CD4-positive, alpha-beta memory T cell (primary cell): ENCODE measurements at regions of chr10 and their contacts with region 1.

Region 1: DNA sequence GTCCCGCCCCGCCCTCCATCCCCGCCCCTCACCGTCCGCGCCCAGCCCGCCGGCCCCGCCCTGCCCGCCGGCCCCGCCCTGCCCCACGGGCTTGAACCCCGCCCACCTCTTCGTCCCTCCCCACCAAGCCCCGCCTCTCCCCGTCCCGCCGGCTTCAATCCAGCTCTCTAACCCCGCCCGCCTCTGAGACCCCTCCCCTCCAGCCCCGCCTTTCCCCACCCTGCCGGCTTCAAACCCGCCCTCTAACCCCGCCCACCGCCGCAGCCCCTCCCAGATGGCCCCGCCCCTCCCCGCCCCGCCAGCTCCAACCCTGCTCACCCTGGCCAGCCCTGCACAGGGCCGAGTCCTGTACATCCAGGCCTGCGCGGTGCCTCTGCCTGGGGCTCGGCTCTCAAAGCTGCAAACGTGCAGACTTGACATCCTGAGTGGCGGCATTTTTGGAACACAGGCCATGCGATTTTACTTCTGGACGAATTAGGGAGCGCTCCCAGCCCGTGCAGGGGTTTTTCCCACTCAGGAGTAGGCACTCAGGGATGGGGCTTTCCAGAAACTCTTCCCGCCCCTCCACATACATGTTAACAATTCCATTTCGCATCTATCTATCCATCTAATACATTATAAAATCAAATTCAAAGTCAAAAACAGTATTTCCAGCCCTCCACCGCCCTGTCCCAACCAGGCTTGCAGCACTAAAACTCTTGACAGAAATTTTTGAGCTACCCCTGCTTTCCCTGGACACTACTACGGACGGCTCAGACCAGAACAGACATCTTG is 475 bp upstream of the NMT2 start:
- DNase-seq: peak; percentile 88 to 96 (median 91)
- H3K4me3 ChIP-seq: peak overlapping the region; percentile 1 to 44
- H3K4me3 Mint-ChIP-seq: peak overlapping the region; percentile 85 to 93 (median 88)
- H3K27ac ChIP-seq: peak overlapping the region; percentile 46
- H3K27ac Mint-ChIP-seq: peak overlapping the region; percentile 73 to 97 (median 93)
- H3K4me1 ChIP-seq: peaks cover 74% of the 10 kb centered on the region
- H3K4me1 Mint-ChIP-seq: peaks cover 46 to 67% (median 57%) of the 10 kb centered on the region in 4 donors
- H3K27me3 ChIP-seq: no peaks in the 10 kb centered on the region
- H3K27me3 Mint-ChIP-seq: no peaks in the 10 kb centered on the region

Region 2: GRCh38 chr10:13787015-13787421 is 1382.0 kb before region 1 on chr10:
- CTCF ChIA-PET with region 1: no interaction called
- POLR2A ChIA-PET with region 1: no interaction called
- intact Hi-C with region 1: loop called (anchors 10 kb)
- DNase-seq: peak; percentile 87 to 94 (median 91)
- H3K4me3 ChIP-seq: peak overlapping the region in 1 of 2 donors; percentile 32
- H3K4me3 Mint-ChIP-seq: peak overlapping the region; percentile 65 to 91 (median 81)
- H3K27ac ChIP-seq: peak overlapping the region; percentile 91
- H3K27ac Mint-ChIP-seq: no peak overlapping the region
- H3K4me1 ChIP-seq: peaks cover 51% of the 10 kb centered on the region
- H3K4me1 Mint-ChIP-seq: peaks cover 10 to 34% (median 25%) of the 10 kb centered on the region in 4 donors
- H3K27me3 ChIP-seq: no peaks in the 10 kb centered on the region
- H3K27me3 Mint-ChIP-seq: no peaks in the 10 kb centered on the region

Region 3: GRCh38 chr10:14959276-14960057 is 209.5 kb before region 1 on chr10 and contains the start of gene MEIG1:
- CTCF ChIA-PET with region 1: no interaction called
- POLR2A ChIA-PET with region 1: no interaction called
- intact Hi-C with region 1: loop called (anchors 2 kb)
- DNase-seq: peak; percentile 87 to 92 (median 88)
- H3K4me3 ChIP-seq: peak within 1 kb of the TSS; percentile 79 to 98
- H3K4me3 Mint-ChIP-seq: peak within 1 kb of the TSS; percentile 93 to 99 (median 96)
- H3K27ac ChIP-seq: peak within 1 kb of the TSS; percentile 92
- H3K27ac Mint-ChIP-seq: peak within 1 kb of the TSS; percentile 93 to 99 (median 96)
- H3K4me1 ChIP-seq: peaks cover 14% of the 10 kb centered on the region
- H3K4me1 Mint-ChIP-seq: peaks cover 20 to 40% (median 29%) of the 10 kb centered on the region in 4 donors
- H3K27me3 ChIP-seq: no peaks in the 10 kb centered on the region
- H3K27me3 Mint-ChIP-seq: no peaks in the 10 kb centered on the region
- total RNA-seq, gene MEIG1: not detected

Region 4: GRCh38 chr10:15106352-15107013 is 62.5 kb before region 1 on chr10:
- CTCF ChIA-PET with region 1: interaction called, 11 read pairs
- POLR2A ChIA-PET with region 1: interaction called, 4 read pairs
- intact Hi-C with region 1: no loop called
- DNase-seq: peak; percentile 55 to 68 (median 62)
- H3K4me3 ChIP-seq: no peak overlapping the region
- H3K4me3 Mint-ChIP-seq: peak overlapping the region in 3 of 8 donors; percentile 11 to 48 (median 45)
- H3K27ac ChIP-seq: no peak overlapping the region
- H3K27ac Mint-ChIP-seq: peak overlapping the region; percentile 72 to 85 (median 76)
- H3K4me1 ChIP-seq: peaks cover 4% of the 10 kb centered on the region
- H3K4me1 Mint-ChIP-seq: peaks cover 4 to 9% (median 7%) of the 10 kb centered on the region in 4 donors
- H3K27me3 ChIP-seq: no peaks in the 10 kb centered on the region
- H3K27me3 Mint-ChIP-seq: no peaks in the 10 kb centered on the region

Region 5: GRCh38 chr10:15182540-15183207 is 13.7 kb after region 1 on chr10:
- CTCF ChIA-PET with region 1: interaction called, 48 read pairs
- POLR2A ChIA-PET with region 1: interaction called, 62 read pairs
- intact Hi-C with region 1: loop called (anchors 1 kb)
- DNase-seq: no peak
- H3K4me3 ChIP-seq: no peak overlapping the region
- H3K4me3 Mint-ChIP-seq: no peak overlapping the region
- H3K27ac ChIP-seq: no peak overlapping the region
- H3K27ac Mint-ChIP-seq: peak overlapping the region in 4 of 7 donors; percentile 14 to 56 (median 20)
- H3K4me1 ChIP-seq: peaks cover 25% of the 10 kb centered on the region
- H3K4me1 Mint-ChIP-seq: peaks cover 12 to 33% (median 21%) of the 10 kb centered on the region in 4 donors
- H3K27me3 ChIP-seq: no peaks in the 10 kb centered on the region
- H3K27me3 Mint-ChIP-seq: no peaks in the 10 kb centered on the region

Region 6: DNA sequence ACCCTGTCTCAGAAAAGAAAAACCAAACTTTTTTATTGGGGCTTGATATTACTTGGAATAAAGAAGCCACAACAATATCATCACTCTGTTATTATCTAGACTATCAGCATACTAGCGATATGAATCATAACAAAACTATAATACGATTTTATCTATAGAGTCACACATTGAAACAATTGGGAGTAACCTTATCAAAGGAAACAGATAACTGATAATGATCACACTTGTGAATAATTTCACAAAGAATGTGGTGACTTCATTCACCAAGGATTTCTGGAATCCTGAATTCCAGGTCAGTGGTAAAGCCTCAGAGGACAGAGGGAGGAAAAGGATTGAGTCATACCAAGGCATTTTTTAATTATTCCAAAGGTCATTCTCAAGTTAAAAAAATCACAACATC is 31.7 kb after region 1 on chr10:
- CTCF ChIA-PET with region 1: interaction called, 4 read pairs
- POLR2A ChIA-PET with region 1: interaction called, 93 read pairs
- intact Hi-C with region 1: loop called (anchors 1 kb)
- DNase-seq: no peak
- H3K4me3 ChIP-seq: no peak overlapping the region
- H3K4me3 Mint-ChIP-seq: peak overlapping the region in 2 of 8 donors; percentile 10 to 20
- H3K27ac ChIP-seq: no peak overlapping the region
- H3K27ac Mint-ChIP-seq: peak overlapping the region in 3 of 7 donors; percentile 3 to 50 (median 32)
- H3K4me1 ChIP-seq: peaks cover 43% of the 10 kb centered on the region
- H3K4me1 Mint-ChIP-seq: peaks cover 9 to 81% (median 48%) of the 10 kb centered on the region in 4 donors
- H3K27me3 ChIP-seq: no peaks in the 10 kb centered on the region
- H3K27me3 Mint-ChIP-seq: peaks cover 0 to 1% of the 10 kb centered on the region in 2 donors

Region 7: DNA sequence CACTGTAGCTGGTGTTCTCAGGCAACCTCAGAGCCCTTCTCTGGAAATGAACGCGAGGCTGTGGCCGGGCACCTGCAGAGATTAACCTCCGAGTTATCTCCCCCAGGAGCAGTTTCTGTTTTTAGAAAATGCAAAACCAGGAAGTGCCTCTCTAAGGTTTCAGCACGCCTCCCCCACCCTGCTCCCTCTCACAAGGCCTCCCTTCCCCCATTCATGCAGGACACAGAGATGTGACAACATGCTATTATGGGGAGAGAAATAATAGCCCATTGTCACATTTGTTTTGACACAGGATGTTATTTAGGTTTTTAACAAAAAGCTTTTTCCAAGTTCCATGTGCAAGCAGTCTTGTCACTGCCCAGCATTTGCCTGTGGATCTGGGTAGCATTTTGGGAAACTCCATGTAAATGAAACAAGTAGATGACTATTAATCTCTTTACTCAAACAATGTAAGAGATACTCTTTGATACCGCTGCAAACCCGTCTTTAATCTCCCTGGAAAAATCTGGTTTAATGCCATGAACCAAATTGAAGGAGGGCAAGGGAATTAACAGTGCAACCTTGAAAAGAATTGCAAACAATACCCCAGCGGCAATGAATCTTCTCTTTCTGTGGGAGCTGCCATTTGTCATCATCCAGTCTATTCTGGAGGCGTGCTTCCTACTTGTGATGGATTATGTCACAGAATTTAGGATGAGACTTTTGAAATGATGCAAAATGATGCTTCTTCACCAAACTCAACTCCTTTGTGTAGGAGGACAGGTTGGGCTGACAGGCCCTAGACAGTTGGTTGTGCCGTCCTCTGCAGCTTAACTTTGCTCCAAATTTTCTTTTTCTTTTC is 86.1 kb after region 1 on chr10:
- CTCF ChIA-PET with region 1: interaction called, 5 read pairs
- POLR2A ChIA-PET with region 1: interaction called, 8 read pairs
- intact Hi-C with region 1: loop called (anchors 5 kb)
- DNase-seq: peak in 4 of 5 donors; percentile 6 to 18 (median 12)
- H3K4me3 ChIP-seq: peak overlapping the region; percentile 58 to 94
- H3K4me3 Mint-ChIP-seq: peak overlapping the region; percentile 90 to 99 (median 97)
- H3K27ac ChIP-seq: peak overlapping the region; percentile 43
- H3K27ac Mint-ChIP-seq: peak overlapping the region; percentile 65 to 95 (median 92)
- H3K4me1 ChIP-seq: peaks cover 28% of the 10 kb centered on the region
- H3K4me1 Mint-ChIP-seq: peaks cover 14 to 43% (median 30%) of the 10 kb centered on the region in 4 donors
- H3K27me3 ChIP-seq: no peaks in the 10 kb centered on the region
- H3K27me3 Mint-ChIP-seq: no peaks in the 10 kb centered on the region

Region 8: GRCh38 chr10:15990523-15991129 is 821.7 kb after region 1 on chr10:
- CTCF ChIA-PET with region 1: no interaction called
- POLR2A ChIA-PET with region 1: no interaction called
- intact Hi-C with region 1: no loop called
- DNase-seq: no peak
- H3K4me3 ChIP-seq: no peak overlapping the region
- H3K4me3 Mint-ChIP-seq: no peak overlapping the region
- H3K27ac ChIP-seq: no peak overlapping the region
- H3K27ac Mint-ChIP-seq: no peak overlapping the region
- H3K4me1 ChIP-seq: no peaks in the 10 kb centered on the region
- H3K4me1 Mint-ChIP-seq: no peaks in the 10 kb centered on the region
- H3K27me3 ChIP-seq: no peaks in the 10 kb centered on the region
- H3K27me3 Mint-ChIP-seq: no peaks in the 10 kb centered on the region